ENCODE measurements at regions of chr4 and their contacts with region 1.

Region 1: GRCh38 chr4:26410385-26411293 is 79.6 kb downstream of the CCKAR start:
- DNase-seq: no peak
- H3K4me3 ChIP-seq: no peak overlapping the region
- H3K27ac ChIP-seq: no peak overlapping the region
- H3K4me1 ChIP-seq: peaks cover 0 to 60% (median 21%) of the 10 kb centered on the region in 4 donors
- H3K27me3 ChIP-seq: no peaks in the 10 kb centered on the region
- CTCF ChIP-seq: peak; percentile 46 to 73 (median 64)
- EP300 ChIP-seq: no peak
- POLR2A ChIP-seq: no peak

Region 2: DNA sequence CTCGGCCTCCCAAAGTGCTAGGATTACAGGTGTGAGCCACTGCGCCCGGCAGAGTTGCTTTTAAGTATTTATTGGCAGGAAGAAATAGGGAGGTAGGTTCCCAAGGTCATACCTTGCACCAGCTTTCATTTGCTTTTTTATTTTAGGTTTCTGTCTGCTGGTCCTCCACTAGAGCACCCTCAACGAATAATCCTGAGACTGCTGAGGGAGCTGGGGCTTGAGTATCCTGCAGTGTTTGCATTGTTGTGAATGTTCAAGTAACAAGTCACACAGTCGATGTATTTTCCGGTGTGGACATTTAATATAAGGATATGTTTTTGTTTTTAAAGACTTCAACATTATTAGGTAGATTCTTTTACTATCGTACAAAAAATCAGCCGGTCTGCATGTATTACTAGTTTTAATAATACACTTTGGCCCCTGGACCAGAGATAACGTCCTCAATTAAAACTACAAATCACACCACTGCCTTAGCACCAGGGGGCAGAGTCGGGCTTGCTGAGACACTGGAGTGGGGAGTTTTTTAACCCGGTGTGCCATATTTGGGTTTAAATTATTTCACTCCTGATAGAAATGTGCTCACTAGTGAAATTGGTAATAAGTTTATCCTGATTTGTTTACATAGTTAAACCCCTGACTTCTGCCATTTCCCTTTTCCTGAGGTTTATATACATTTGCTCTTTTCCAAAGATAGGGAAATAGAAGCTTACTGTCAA is 485.0 kb before region 1 on chr4:
- intact Hi-C with region 1: loop called (anchors 5 kb)
- DNase-seq: no peak
- H3K4me3 ChIP-seq: no peak overlapping the region
- H3K27ac ChIP-seq: no peak overlapping the region
- H3K4me1 ChIP-seq: no peaks in the 10 kb centered on the region
- H3K27me3 ChIP-seq: no peaks in the 10 kb centered on the region
- CTCF ChIP-seq: peak in 3 of 4 experiments; percentile 19 to 34 (median 28)
- EP300 ChIP-seq: no peak
- POLR2A ChIP-seq: no peak

Region 3: DNA sequence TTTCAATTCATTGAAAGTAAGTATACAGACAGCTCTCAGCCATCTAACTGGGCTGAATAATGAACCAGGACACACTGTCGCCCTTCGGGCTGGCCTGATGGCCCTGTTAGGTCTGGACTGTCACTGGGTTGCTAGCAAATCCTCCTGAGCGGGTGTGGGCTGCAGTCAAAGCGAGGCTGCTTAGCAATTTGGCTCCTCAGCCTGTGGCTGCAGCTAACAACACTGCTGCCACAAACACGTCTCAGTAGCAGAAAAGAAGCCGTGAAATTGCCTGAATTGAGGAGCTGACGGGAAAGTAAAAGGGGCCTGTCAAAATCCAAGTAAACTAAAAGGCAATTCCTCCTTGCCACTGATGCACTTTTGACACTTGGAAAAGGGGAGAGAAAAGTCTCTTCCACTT is 423.8 kb before region 1 on chr4:
- intact Hi-C with region 1: loop called (anchors 5 kb)
- DNase-seq: no peak
- H3K4me3 ChIP-seq: no peak overlapping the region
- H3K27ac ChIP-seq: no peak overlapping the region
- H3K4me1 ChIP-seq: peaks cover 0 to 9% (median 4%) of the 10 kb centered on the region in 4 donors
- H3K27me3 ChIP-seq: no peaks in the 10 kb centered on the region
- CTCF ChIP-seq: no peak
- EP300 ChIP-seq: no peak
- POLR2A ChIP-seq: no peak

Region 4: DNA sequence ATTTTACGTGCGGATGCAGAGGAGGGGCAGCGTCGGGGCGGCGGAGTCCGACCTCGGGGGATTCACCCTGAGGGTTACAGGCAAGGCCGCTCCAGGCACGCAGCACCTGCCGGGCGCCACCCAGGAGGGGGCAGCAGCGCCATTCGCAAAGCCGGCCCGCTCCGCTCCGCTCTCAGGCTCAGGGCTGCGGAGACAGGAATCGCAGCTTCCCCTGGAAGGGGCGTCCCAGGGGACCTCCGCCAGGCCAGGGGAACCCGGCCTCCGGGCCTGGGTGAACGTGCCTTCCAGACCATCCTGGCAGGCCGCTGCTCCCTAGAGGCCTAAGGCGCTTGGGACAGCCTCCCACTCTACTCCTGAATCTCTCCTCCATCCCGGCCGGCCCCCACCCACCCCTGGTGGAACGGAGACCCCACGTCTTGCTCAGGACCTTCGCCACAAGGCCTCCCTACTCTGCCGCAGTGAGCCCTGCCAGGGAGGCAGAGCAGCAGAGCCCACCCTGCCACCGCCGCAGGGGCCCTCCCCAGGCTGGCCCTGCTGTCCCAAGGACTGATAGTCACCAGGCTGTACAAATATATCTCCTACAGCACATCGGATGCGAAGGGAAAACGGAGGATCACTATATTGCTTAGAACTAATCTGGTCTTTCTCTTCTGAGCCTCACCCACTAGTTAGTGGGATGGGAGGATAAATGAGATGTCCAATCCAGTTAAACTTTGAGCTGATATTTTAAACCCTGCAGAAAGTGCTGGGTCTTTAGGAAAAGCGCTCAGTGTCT is 381.7 kb before region 1 on chr4:
- intact Hi-C with region 1: loop called (anchors 2 kb)
- DNase-seq: peak; percentile 88
- H3K4me3 ChIP-seq: peak overlapping the region in 3 of 4 donors; percentile 20 to 24 (median 23)
- H3K27ac ChIP-seq: peak overlapping the region in 1 of 4 donors; percentile 36
- H3K4me1 ChIP-seq: peaks cover 0 to 28% (median 20%) of the 10 kb centered on the region in 4 donors
- H3K27me3 ChIP-seq: no peaks in the 10 kb centered on the region
- CTCF ChIP-seq: peak; percentile 67 to 93 (median 72)
- EP300 ChIP-seq: no peak
- POLR2A ChIP-seq: no peak

Region 5: DNA sequence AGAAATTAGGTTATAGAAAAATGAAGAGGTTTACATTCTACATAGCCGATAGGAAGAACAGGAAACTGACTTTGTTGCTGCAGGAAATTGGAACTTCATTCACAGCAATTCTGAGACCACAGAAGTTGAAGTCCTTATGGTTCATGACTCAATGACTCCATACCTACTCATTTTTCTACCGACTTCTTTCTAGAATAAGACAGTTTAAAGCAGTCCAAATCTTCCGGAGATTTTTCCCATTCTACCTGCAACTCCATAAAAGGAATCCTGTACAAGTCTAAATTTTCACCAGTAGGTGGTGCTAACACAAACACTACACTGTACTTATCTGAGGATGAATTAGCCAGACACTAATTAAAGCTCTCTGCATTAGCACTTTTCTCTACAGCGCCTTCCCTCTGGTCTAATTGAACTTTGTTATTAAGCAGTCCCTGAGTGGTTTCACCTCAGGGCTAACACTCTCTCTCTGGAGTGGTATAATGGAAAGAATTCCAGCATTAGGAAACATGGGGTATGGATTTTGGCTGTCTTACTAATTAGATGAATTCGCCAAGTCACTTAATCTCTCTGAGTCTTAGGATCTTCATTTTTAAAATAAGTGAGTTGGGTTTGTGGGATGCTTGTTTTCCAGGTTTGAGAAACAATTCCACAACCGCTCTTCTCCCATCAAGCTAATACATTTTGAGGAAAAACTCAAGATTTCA is 328.7 kb before region 1 on chr4:
- intact Hi-C with region 1: loop called (anchors 10 kb)
- DNase-seq: no peak
- H3K4me3 ChIP-seq: no peak overlapping the region
- H3K27ac ChIP-seq: no peak overlapping the region
- H3K4me1 ChIP-seq: peaks cover 0 to 23% (median 7%) of the 10 kb centered on the region in 4 donors
- H3K27me3 ChIP-seq: no peaks in the 10 kb centered on the region
- CTCF ChIP-seq: peak; percentile 41 to 77 (median 70)
- EP300 ChIP-seq: no peak
- POLR2A ChIP-seq: no peak

Region 6: DNA sequence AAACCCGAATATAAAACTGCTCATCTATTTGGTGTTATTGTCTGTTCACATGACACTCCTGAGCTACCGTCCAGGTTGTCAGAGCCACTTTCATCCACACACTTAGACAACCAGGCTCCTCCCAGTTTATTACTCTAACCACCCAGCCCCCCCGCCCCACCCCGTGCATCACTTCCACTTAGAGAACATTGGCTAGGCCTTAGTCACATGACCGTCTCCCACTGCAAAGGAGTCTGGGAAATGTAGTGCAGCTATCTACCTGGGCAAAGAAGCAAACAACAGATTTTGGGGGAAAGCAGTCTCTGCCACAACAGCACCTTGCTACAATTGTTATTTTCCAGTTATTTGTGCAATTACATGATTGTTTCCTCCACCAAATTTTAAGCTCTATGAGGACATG is 147.5 kb before region 1 on chr4:
- intact Hi-C with region 1: no loop called
- DNase-seq: no peak
- H3K4me3 ChIP-seq: no peak overlapping the region
- H3K27ac ChIP-seq: no peak overlapping the region
- H3K4me1 ChIP-seq: peaks cover 0 to 20% (median 16%) of the 10 kb centered on the region in 4 donors
- H3K27me3 ChIP-seq: no peaks in the 10 kb centered on the region
- CTCF ChIP-seq: no peak
- EP300 ChIP-seq: no peak
- POLR2A ChIP-seq: no peak

Region 7: GRCh38 chr4:26330186-26330787 is 80.4 kb before region 1 on chr4:
- intact Hi-C with region 1: loop called (anchors 2 kb)
- DNase-seq: no peak
- H3K4me3 ChIP-seq: no peak overlapping the region
- H3K27ac ChIP-seq: peak overlapping the region in 1 of 4 donors; percentile 2
- H3K4me1 ChIP-seq: peaks cover 0 to 61% (median 38%) of the 10 kb centered on the region in 4 donors
- H3K27me3 ChIP-seq: no peaks in the 10 kb centered on the region
- CTCF ChIP-seq: peak; percentile 38 to 73 (median 62)
- EP300 ChIP-seq: no peak
- POLR2A ChIP-seq: no peak

Region 8: DNA sequence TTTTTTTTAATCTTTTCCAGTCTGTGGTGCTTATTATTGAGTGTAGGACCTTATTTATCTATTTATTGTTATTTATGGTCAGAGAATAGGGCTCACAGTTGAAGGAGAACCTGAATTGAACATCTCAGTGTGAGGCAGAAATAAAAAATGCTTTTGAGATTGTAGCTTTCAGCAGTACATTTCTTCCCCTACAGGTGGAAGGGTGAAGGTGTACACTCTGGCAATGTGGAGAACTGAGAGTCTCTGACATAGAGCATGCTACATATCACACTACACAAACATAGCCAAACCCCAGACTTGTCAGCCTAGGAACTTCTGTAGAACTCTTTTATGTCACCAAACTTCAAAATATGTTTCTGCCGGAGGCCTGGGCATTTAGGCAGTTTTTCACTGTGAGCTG is 590.2 kb after region 1 on chr4:
- intact Hi-C with region 1: loop called (anchors 10 kb)
- DNase-seq: no peak
- H3K4me3 ChIP-seq: no peak overlapping the region
- H3K27ac ChIP-seq: no peak overlapping the region
- H3K4me1 ChIP-seq: peaks cover 0 to 27% (median 12%) of the 10 kb centered on the region in 4 donors
- H3K27me3 ChIP-seq: no peaks in the 10 kb centered on the region
- CTCF ChIP-seq: no peak
- EP300 ChIP-seq: no peak
- POLR2A ChIP-seq: no peak

Measured in sigmoid colon (tissue), 7 donors.